PC-9 (cell line): ENCODE measurements at regions of chr15 and their contacts with region 1.

Region 1: GRCh38 chr15:43854801-43855200 is 28.0 kb downstream of the WDR76 start:
- DNase-seq: no peak
- H3K4me3 ChIP-seq: no peak overlapping the region
- H3K27ac ChIP-seq: no peak overlapping the region
- H3K4me1 ChIP-seq: no peaks in the 10 kb centered on the region
- H3K27me3 ChIP-seq: no peaks in the 10 kb centered on the region
- CTCF ChIP-seq: no peak

Region 2: GRCh38 chr15:44318761-44319160 is 464.0 kb after region 1 on chr15:
- CTCF ChIA-PET with region 1: no interaction called
- POLR2A ChIA-PET with region 1: interaction called, 12 read pairs
- intact Hi-C with region 1: no loop called
- DNase-seq: no peak
- H3K4me3 ChIP-seq: no peak overlapping the region
- H3K27ac ChIP-seq: no peak overlapping the region
- H3K4me1 ChIP-seq: no peaks in the 10 kb centered on the region
- H3K27me3 ChIP-seq: no peaks in the 10 kb centered on the region
- CTCF ChIP-seq: no peak